BJ (cell line): ENCODE measurements at regions of chr11 and their contacts with region 1.

Region 1: GRCh38 chr11:74726547-74727182 is 4.6 kb downstream of the CHRDL2 start:
- DNase-seq: no peak
- H3K4me3 ChIP-seq: no peak overlapping the region
- H3K27me3 ChIP-seq: peaks cover 40% of the 10 kb centered on the region
- CTCF ChIP-seq: peak; percentile 99

Region 2: DNA sequence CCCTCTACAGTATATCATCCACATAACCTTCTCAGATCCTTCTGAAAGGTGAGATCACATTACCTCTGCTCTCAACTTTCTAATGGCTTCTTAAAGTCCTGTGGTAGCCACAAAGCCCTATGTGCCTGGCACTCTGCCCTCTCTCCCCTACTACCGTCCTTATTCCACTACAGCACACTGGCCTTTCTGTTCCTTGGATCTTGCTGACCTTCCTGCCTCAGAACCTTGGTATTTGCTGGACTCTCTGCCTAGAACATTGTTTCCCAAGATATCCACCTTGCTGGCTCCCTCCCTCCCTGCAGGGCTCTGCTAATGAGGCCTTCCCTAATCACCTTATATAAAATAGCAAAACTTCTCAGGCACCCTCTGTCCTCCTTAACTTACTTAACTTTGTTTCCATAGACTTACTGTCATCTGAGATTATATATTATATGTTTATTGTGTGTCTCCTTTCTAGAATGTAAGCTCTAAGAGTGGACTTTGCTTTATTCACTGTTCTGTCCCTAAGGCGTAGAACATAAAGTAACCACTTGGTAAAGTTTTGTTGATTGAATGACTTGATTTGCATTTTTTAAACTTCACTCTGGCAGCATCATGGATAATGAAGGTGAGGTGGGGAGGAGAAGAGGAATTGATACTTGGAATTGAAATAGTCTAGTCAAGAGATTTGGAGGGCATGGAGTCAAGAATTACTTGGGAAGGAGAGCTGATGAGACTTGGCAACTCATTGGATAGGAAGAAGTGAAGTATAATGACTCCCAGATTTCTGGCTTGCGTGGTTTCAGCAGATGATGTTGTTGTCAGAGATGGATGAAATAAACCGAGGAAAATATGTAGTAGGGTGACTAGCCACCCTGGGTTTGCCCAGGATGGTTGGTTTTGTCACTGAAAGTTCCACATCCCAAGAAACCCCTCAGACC is 123.8 kb before region 1 on chr11:
- CTCF ChIA-PET with region 1: interaction called, 70 read pairs
- POLR2A ChIA-PET with region 1: no interaction called
- DNase-seq: no peak
- H3K4me3 ChIP-seq: no peak overlapping the region
- H3K27me3 ChIP-seq: no peaks in the 10 kb centered on the region
- CTCF ChIP-seq: no peak

Region 3: DNA sequence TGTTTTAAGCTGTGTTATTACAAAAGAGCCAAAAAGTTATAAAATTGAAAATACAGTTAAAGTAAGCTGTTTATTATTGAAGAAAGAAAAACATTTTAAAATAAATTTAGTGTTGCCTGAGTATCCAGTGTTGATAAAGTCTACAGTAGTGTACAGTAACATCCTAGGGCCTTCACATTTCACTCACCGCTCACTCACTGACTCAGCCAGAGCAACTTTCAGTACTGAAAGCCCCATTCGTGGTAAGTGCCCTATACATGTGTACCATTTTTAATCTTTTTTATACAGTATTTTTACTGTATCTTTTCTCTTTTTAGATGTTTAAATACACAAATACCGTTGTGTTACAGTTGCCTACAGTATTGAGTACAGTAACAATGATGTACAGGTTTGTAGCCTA is 99.3 kb before region 1 on chr11:
- CTCF ChIA-PET with region 1: interaction called, 40 read pairs
- POLR2A ChIA-PET with region 1: no interaction called
- DNase-seq: no peak
- H3K4me3 ChIP-seq: no peak overlapping the region
- H3K27me3 ChIP-seq: no peaks in the 10 kb centered on the region
- CTCF ChIP-seq: no peak

Region 4: DNA sequence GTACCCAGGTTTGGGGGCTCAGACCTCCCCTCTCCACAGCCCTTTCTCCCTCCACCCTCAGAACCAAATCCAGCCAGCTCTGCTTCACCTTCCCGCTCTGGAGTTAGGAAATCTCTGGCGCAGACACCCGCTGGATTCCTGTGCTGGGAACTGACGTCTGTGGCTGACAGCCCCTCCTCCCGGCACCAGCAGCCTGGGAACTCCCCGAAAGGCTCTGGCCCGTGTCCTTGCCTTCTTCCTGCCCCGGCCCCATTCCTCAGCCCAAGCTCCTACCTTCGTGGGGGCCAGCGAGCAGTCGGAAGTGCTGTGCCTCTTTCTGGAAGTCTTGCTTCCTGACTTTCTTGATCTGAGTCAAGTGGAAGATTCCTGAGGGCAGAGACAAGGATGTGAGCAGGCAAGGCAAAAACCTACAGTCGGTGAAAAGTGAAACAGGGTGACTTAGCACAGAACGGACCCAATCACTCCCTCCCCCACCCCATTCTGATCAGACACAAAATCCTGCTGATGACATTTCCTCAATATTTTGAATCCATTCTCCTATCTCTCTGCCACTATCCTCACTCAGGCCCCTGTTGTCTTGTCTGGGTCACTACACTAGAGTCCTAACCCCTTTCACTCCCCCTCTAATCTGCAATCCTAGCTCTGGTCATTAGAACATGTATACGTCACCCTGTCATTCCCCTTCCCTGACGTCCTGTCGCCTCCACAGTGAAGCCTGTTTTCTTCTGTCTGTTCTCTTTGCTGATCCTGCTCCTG is 29.6 kb before region 1 on chr11:
- CTCF ChIA-PET with region 1: interaction called, 76 read pairs
- POLR2A ChIA-PET with region 1: no interaction called
- DNase-seq: peak; percentile 60
- H3K4me3 ChIP-seq: no peak overlapping the region
- H3K27me3 ChIP-seq: no peaks in the 10 kb centered on the region; the same call in 1 of the 2 replicates
- CTCF ChIP-seq: no peak

Region 5: GRCh38 chr11:74710281-74710938 is 16.3 kb before region 1 on chr11:
- CTCF ChIA-PET with region 1: interaction called, 25 read pairs
- POLR2A ChIA-PET with region 1: interaction called, 5 read pairs
- DNase-seq: no peak
- H3K4me3 ChIP-seq: no peak overlapping the region
- H3K27me3 ChIP-seq: no peaks in the 10 kb centered on the region; the same call in 1 of the 2 replicates
- CTCF ChIP-seq: no peak